ENCODE measurements at regions of chr7 and their contacts with region 1.

Region 1: DNA sequence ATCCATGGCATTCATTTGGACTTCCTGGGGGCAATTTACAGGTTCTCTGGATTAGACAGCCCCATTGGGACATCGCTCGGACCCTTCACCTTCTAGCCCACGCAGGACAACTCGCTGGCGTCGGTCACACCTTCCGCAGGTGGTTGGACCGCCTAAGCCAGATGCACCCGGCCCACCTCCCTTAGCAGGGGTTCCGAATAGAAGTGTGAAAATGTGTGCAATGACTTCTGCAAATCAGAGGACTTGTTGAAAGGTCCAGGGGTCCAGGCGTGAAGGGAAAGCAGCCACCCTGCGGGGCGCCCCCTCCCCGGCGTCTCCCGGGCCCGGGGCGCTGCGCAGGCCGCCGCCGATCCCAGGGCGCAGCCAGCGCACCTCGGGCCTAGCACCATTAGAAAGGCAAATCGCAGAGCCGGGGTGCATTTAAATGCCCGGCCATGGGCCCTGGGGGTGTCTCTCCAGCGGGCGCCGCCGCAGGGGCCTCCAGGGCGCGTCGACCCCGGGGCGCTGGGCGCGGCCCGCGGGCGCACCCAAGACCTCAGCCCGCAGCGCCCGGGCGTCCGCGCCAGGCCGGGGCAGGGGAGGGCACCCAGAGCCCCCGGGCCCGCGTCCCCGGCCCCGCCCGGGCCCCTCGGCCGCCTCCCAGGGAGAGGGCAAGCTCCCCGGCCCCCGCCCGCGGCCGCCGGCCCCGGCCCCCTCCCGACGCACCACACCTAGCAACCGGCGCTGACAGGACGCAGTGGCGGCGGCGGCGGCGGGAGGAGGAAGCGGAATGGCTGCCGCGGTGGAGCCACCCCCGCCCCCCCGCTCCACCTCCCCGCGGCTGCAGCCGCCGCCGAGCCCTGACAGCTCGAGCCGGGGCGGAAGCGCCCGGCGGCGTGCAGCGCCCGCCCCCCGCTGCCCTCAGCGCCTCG is 1.2 kb downstream of the JAZF1 start:
- DNase-seq: peak; percentile 73
- ATAC-seq: peak; percentile 59
- H3K4me3 Mint-ChIP-seq: peak overlapping the region; percentile 80
- H3K27ac Mint-ChIP-seq: peak overlapping the region; percentile 84
- H3K4me1 Mint-ChIP-seq: peaks cover 77% of the 10 kb centered on the region
- H3K27me3 Mint-ChIP-seq: no peaks in the 10 kb centered on the region
- CTCF ChIP-seq: no peak

Region 2: GRCh38 chr7:28096713-28097112 is 82.7 kb before region 1 on chr7:
- CTCF ChIA-PET with region 1: interaction called, 4 read pairs
- POLR2A ChIA-PET with region 1: interaction called, 12 read pairs
- intact Hi-C with region 1: loop called (anchors 2 kb)
- DNase-seq: no peak
- ATAC-seq: no peak
- H3K4me3 Mint-ChIP-seq: no peak overlapping the region
- H3K27ac Mint-ChIP-seq: no peak overlapping the region
- H3K4me1 Mint-ChIP-seq: peaks cover 40% of the 10 kb centered on the region
- H3K27me3 Mint-ChIP-seq: no peaks in the 10 kb centered on the region
- CTCF ChIP-seq: peak; percentile 50

Region 3: GRCh38 chr7:28165961-28166955 is 13.1 kb before region 1 on chr7:
- CTCF ChIA-PET with region 1: interaction called, 3 read pairs
- POLR2A ChIA-PET with region 1: interaction called, 22 read pairs
- intact Hi-C with region 1: loop called (anchors 1 kb)
- DNase-seq: no peak
- ATAC-seq: no peak
- H3K4me3 Mint-ChIP-seq: peak overlapping the region; percentile 59
- H3K27ac Mint-ChIP-seq: peak overlapping the region; percentile 85
- H3K4me1 Mint-ChIP-seq: peaks cover 95% of the 10 kb centered on the region
- H3K27me3 Mint-ChIP-seq: no peaks in the 10 kb centered on the region
- CTCF ChIP-seq: no peak

Region 4: DNA sequence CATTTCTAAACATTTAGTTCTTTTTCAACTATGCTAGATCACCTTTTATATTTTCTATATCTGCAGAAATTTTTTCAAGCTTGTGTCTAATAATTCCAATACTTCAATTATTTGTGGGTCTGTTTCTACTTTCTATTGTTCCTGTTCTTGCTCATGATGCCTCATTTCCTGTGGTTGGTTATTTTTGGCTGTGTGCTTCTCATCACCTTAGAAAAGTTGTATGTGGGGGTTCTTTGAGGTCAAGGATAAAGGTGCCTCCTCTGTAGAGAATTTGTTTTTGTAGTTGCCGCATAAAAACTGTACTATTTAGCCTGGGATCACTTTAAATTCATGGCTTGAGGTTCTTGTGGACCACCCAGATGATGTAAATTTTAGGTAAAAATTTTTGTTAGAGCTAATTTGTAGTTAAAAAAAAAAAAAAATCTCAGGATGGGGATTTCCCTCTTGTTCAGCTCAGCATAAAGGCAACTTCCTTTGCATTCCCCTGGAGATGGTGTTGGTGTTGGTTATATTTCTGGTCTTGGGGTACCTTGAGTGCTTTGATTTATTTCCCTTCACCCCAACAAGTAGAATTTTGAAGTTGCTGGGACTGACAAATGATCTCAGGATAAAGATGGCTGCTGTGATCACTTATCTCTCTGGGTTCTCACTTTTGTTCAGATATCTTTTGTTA is 28.2 kb after region 1 on chr7:
- CTCF ChIA-PET with region 1: interaction called, 3 read pairs
- POLR2A ChIA-PET with region 1: interaction called, 3 read pairs
- intact Hi-C with region 1: loop called (anchors 1 kb)
- DNase-seq: no peak
- ATAC-seq: peak; percentile 78
- H3K4me3 Mint-ChIP-seq: peak overlapping the region; percentile 66
- H3K27ac Mint-ChIP-seq: peak overlapping the region; percentile 88
- H3K4me1 Mint-ChIP-seq: peaks cover 81% of the 10 kb centered on the region
- H3K27me3 Mint-ChIP-seq: no peaks in the 10 kb centered on the region
- CTCF ChIP-seq: no peak

Region 5: DNA sequence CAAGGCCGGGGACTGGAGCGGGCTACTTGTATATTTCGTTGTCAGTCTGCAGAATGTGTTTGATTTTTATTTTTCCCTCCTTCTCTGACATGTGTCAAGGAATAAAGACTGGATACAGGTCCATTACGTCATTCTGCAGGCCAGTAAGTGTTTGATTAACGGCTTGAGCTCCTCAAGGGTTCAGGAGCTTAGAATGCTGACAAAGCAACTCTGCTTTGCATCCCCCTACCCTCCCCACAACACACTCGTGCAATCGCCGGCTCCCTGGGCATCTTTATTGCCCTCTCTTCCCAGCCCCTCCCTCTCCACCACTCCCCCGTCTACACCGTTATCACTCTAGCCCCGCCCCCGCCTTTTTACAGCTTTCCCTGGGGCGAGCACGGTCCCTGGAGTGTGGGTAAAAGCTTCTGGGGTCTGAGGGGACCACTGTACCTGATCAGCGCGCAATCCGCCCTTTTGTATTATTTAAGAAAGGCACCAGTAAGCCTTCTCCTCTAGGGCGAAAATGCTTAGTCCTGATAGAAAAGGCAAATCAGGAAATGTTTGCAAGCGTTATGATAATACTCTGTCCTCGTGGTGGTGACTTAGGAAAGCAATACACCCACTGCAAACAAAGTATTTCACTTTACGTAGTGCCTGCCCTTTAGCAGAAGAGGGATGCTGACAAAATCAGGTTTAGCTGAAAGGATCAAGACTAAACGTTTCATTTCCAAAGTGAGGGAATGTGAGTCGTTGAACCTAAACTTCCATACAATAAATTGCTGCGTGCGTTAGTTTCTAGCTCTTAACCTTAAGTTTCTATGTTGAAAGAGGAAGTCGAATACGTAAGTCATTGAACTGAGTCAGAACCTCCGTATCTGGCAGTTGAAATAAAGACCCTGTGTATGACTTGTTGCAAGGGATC is 231.5 kb after region 1 on chr7:
- CTCF ChIA-PET with region 1: no interaction called
- POLR2A ChIA-PET with region 1: no interaction called
- intact Hi-C with region 1: loop called (anchors 5 kb)
- DNase-seq: peak; percentile 24
- ATAC-seq: peak; percentile 61
- H3K4me3 Mint-ChIP-seq: peak overlapping the region; percentile 81
- H3K27ac Mint-ChIP-seq: no peak overlapping the region
- H3K4me1 Mint-ChIP-seq: peaks cover 37% of the 10 kb centered on the region
- H3K27me3 Mint-ChIP-seq: peaks cover 48% of the 10 kb centered on the region
- CTCF ChIP-seq: no peak

Measured in activated B cell treated with CpG ODN at 0.5 μM for 24 hours (primary cell).